ENCODE measurements at regions of chr5 and their contacts with region 1.

Region 1: DNA sequence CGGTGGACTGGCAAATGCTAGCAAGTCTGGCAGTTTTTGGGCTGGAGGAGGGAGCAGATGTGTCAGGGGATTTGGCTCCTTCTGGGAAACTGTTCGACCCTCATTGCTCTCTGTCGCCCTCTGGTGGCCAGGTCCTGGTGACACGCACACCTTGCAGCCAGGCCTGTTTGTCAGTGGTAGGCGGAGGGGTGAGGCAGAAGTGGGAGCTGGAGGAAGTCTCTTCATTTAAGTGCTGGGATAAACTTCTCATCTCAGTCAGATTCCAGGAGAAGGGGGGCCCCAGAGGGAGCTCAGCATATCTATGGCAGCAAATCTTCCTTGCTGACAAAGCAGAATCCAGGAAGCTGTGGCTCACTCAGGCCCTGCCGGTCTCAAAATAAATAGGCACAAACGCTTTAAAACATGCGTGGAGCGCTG is 326.5 kb downstream of the ZSWIM6 start:
- DNase-seq: peak; percentile 87
- ATAC-seq: peak; percentile 83
- H3K4me3 Mint-ChIP-seq: no peak overlapping the region
- H3K27ac Mint-ChIP-seq: no peak overlapping the region
- H3K4me1 Mint-ChIP-seq: no peaks in the 10 kb centered on the region
- H3K27me3 Mint-ChIP-seq: peaks cover 8% of the 10 kb centered on the region
- CTCF ChIP-seq: peak; percentile 82

Region 2: DNA sequence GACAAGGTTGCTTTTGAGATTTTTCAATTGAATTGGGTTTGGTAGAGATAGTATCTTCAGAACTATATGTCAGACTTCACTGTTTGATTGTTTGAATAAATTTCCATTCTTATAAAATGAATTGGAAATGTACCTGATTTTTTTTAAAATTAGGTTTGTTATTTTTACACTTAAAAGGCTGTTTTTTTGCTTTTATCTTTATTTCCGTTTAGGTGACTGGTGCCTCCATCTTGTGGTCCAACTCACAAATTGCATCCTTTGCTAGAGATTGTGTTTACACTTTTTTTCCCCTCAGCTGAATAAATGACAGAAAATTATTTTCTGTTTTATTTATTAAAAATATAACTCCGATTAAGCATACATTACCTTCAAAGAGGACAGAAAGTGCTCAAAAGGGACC is 698.0 kb before region 1 on chr5:
- CTCF ChIA-PET with region 1: interaction called, 6 read pairs
- POLR2A ChIA-PET with region 1: no interaction called
- intact Hi-C with region 1: loop called (anchors 5 kb)
- DNase-seq: peak; percentile 20
- ATAC-seq: no peak
- H3K4me3 Mint-ChIP-seq: no peak overlapping the region
- H3K27ac Mint-ChIP-seq: no peak overlapping the region
- H3K4me1 Mint-ChIP-seq: peaks cover 14% of the 10 kb centered on the region
- H3K27me3 Mint-ChIP-seq: no peaks in the 10 kb centered on the region
- CTCF ChIP-seq: peak; percentile 68

Region 3: DNA sequence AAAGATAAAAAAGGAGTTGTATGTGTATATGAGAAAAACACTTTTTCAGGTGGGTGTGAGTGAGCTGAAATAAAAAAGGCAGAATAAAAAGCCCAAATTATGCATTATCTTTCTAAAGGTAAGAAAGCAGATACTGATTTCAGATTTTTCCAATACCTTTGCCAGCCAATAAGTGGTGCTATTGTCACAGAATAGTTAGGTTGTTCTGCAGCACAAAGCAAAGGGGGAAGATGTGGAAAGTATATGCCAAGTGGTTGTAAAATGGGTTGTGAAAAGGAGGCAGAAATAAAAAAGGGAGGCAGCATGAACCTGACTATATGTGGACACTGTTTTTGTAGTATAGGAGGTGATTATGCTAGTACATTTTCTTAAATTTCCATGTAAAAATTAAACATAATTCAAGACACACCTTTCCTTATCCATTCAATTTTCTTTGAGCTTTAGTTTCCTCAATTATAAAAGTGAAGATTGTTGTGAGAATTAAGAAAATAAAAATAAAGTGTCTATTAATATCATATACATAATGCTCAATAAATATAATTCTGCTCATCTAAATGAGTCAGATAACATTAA is 603.1 kb before region 1 on chr5:
- CTCF ChIA-PET with region 1: interaction called, 17 read pairs
- POLR2A ChIA-PET with region 1: no interaction called
- intact Hi-C with region 1: loop called (anchors 10 kb)
- DNase-seq: no peak
- ATAC-seq: no peak
- H3K4me3 Mint-ChIP-seq: no peak overlapping the region
- H3K27ac Mint-ChIP-seq: no peak overlapping the region
- H3K4me1 Mint-ChIP-seq: peaks cover 8% of the 10 kb centered on the region
- H3K27me3 Mint-ChIP-seq: no peaks in the 10 kb centered on the region
- CTCF ChIP-seq: peak; percentile 61

Region 4: DNA sequence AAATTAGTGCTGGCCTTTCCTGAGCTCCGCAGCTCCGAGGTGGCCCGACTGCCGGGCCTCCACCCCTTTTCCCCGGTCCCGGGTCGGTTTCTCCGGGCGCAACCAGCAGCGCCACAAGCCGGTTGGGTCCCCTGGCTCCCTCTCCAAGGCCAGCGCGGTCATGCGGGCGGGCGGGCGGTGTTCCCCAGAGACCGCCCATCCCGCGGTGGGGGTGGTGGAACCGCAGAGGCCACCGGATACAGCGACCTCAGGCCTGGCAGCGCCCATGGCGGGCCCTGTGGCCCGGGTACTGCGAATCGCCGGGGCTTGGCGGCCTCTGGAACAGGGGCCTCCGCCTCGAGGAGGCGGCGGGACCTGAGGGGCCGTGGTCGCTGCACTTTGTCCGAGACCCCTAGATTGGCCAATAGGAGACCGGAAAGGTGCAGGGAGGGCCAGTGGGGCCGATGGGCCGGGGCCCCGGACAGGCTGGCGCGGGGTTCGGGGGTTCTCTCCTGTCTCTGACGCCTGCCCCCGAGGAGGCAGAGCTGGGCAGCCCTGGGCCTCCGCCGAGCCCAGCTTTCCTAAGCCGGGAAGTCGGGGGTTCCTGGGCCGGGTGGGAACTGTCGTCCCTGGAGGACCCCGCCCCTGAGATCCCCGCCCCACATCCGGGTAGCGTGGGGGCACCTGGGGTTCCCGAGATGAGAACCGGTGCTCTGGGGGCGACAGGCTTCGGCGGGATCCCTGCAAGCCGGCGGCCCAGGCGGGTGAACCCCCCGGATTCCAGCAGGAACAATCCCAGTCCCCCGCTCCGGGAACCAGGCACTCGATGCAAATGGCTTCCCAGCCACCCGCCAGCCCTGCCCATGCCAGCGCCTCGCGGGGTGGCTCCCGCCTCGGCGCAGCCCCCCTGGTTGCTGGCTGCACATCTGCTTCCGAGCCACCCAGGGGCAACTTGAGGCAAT is 32.6 kb before region 1 on chr5:
- CTCF ChIA-PET with region 1: interaction called, 17 read pairs
- POLR2A ChIA-PET with region 1: no interaction called
- intact Hi-C with region 1: no loop called
- DNase-seq: peak; percentile 46
- ATAC-seq: peak; percentile 72
- H3K4me3 Mint-ChIP-seq: peak overlapping the region; percentile 41
- H3K27ac Mint-ChIP-seq: no peak overlapping the region
- H3K4me1 Mint-ChIP-seq: peaks cover 10% of the 10 kb centered on the region
- H3K27me3 Mint-ChIP-seq: peaks cover 45% of the 10 kb centered on the region
- CTCF ChIP-seq: no peak

Region 5: DNA sequence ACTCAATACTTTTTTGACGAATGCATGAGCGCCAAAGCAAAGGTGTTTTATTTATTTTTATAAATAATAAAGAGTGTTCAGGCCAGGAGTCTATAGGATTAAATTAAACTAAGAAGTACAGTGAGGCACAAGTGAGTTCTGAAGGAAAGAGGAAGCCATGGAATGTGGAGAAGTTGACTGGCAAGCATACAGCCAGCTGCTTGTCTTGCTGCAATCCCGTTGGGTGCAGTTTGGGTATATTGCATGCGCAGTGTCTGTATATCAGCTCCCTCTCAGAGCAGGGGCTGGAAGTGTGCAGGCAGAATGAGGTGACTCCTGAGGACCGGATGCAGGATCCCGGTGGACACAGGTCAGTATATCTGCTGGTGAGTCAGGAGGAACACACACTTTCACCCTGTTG is 10.9 kb before region 1 on chr5:
- CTCF ChIA-PET with region 1: interaction called, 14 read pairs
- POLR2A ChIA-PET with region 1: no interaction called
- intact Hi-C with region 1: no loop called
- DNase-seq: no peak
- ATAC-seq: no peak
- H3K4me3 Mint-ChIP-seq: no peak overlapping the region
- H3K27ac Mint-ChIP-seq: no peak overlapping the region
- H3K4me1 Mint-ChIP-seq: no peaks in the 10 kb centered on the region
- H3K27me3 Mint-ChIP-seq: peaks cover 5% of the 10 kb centered on the region
- CTCF ChIP-seq: no peak

Measured in activated CD8-positive, alpha-beta T cell treated with anti-CD3 and anti-CD28 coated beads for 36 hours (primary cell).